ENCODE measurements at regions of chr7 and their contacts with region 1.

Region 1: GRCh38 chr7:85483177-85483576 is 296.3 kb upstream of the SEMA3D start:
- DNase-seq: peak; percentile 77
- ATAC-seq: peak; percentile 79
- H3K4me3 ChIP-seq: no peak overlapping the region
- H3K27ac ChIP-seq: no peak overlapping the region
- H3K4me1 ChIP-seq: no peaks in the 10 kb centered on the region; the same call in 1 of the 2 replicates
- H3K27me3 ChIP-seq: no peaks in the 10 kb centered on the region
- CTCF ChIP-seq: no peak
- POLR2A ChIP-seq: no peak
- RAD21 ChIP-seq: no peak

Region 2: DNA sequence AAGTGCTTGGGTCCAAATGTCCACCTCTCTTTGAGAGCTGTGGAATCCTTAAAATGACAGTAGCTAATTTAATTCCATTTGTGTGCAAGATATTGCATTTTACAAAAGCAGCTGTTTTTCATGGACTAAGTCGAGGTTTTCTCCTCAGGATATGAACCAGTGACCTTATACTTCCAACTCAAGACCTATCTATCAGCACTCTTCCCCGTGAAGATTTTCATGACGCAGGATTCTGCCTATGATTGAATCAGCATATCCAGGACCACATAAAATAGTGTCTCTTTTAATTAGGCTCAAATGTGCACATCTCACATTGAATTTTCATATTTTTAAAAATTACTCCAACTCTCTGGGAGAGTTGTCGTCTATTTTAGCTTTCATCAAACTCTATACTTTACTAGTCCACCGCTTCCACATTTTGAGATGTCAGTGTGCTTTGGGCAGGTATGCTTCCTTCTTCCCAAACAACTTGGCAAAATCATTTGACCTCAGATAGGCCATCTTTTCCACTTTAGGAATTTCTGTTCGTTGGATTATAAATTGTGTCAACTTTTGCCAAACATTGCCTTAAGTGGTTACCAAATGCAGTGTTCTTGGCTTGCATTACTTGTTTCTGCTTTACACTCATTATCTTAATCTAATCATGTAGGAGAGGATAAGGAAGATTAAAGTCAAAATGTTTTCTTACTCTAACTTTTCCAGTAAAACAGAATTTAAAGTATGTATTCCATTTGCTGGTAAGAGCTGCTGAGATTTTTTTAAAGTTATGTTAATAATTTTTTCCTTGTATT is 1328.0 kb before region 1 on chr7:
- CTCF ChIA-PET with region 1: no interaction called
- POLR2A ChIA-PET with region 1: interaction called, 10 read pairs
- dilution Hi-C with region 1: no loop called
- in situ Hi-C with region 1: no loop called
- intact Hi-C with region 1: no loop called
- DNase-seq: no peak
- ATAC-seq: no peak
- H3K4me3 ChIP-seq: no peak overlapping the region
- H3K27ac ChIP-seq: no peak overlapping the region
- H3K4me1 ChIP-seq: peaks cover 1% of the 10 kb centered on the region; the same call in 1 of the 2 replicates
- H3K27me3 ChIP-seq: no peaks in the 10 kb centered on the region
- CTCF ChIP-seq: no peak
- POLR2A ChIP-seq: no peak
- RAD21 ChIP-seq: no peak

Region 3: DNA sequence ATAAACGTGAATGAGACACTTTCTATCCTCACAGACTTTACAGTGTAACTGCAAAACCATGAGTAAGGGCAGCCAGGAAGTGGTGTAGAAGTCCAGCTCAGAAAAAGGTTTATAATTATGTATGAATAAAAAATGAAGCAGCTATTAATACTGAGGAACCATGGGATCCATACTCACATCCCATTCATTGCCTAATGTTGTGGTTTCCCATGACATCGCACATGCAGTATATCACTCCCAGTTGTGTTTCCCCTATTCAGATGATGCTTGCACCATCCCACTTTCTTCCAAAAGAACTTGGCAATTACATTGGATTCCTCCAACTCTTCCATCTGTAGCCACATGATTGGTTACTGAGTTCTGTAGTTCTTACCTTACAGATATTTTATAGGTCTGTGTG is 221.8 kb before region 1 on chr7:
- CTCF ChIA-PET with region 1: no interaction called
- POLR2A ChIA-PET with region 1: no interaction called
- dilution Hi-C with region 1: no loop called
- in situ Hi-C with region 1: no loop called
- intact Hi-C with region 1: no loop called
- DNase-seq: peak; percentile 55
- ATAC-seq: no peak
- H3K4me3 ChIP-seq: no peak overlapping the region
- H3K27ac ChIP-seq: no peak overlapping the region
- H3K4me1 ChIP-seq: no peaks in the 10 kb centered on the region
- H3K27me3 ChIP-seq: no peaks in the 10 kb centered on the region; the same call in 1 of the 2 replicates
- CTCF ChIP-seq: no peak
- POLR2A ChIP-seq: no peak
- RAD21 ChIP-seq: no peak